ENCODE measurements at regions of chr6 and their contacts with region 1.

Region 1: DNA sequence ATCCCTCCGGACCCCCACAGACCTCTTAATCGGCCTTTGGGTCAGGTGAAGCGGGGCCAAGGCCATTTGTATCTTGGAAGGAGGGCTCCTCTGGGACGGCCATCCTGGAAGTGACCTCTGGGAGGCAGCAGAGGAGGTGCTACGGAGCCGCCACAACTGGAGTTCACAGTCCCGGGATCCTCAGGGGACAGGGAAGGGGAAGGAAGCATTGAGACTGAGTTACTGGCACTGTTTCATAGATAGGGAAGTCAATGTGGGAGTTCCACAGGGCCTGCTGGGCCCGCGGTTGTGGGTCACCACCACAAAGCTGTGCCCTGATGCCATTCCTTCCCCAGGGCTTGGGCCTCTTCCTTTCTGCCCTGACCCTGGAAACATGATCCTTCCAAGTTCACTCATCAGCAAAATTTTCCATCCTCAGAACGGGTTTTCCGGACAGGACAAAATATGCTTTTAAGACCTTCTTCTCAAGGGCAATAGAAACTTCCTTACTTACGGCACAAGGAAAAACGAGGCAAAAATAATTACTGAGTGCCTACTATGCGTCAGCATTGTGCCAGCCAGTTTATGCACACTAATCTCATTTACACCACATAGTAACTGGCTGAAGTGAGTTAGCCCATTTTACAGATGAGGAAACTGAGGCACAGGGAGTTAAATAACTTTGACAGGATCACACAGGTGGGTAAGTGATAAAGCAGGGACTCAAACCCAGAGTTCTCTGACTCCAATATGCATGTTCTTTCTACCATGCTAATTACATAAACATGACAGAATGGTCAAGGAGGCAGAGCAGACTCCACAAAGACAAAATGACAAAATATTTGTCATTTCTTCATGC is 143.8 kb downstream of the UNC5CL start:
- DNase-seq: peak; percentile 68 to 76 (median 72)
- ATAC-seq: peak; percentile 84
- H3K4me3 ChIP-seq: no peak overlapping the region
- H3K27ac ChIP-seq: peak overlapping the region in 2 of 4 donors; percentile 5 to 27
- H3K4me1 ChIP-seq: peaks cover 43% of the 10 kb centered on the region
- H3K27me3 ChIP-seq: no peaks in the 10 kb centered on the region
- CTCF ChIP-seq: peak; percentile 46 to 80 (median 73)
- POLR2A ChIP-seq: no peak

Region 2: DNA sequence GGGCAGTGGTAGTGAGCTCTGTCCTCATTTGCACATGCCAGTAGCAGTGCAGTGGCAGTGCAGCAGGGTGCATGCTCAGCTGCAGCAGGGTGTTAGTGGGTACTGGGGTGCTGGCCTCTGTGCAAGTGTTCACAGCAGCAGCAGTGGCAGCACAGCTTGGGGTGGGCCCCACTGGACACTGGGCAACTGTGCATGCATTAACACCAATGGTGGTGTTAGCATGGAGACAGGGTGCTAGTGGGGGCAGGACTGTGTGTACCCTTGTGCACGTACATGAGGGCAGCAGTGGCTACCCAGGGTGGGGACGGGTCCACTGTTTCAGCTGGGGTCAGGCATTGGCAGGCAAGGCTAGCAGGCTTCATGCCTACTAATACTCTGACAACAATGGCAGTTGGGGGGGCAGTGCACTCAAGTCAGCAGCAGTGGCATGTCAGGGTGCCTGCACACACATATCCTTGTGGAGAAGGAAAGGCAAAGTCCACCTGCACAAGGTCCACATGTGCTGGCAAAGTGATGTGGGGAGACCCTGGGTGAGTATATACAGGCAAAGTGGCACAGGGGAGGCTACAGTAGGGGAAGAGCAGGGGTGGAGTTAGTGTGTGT is 83.6 kb after region 1 on chr6:
- intact Hi-C with region 1: no loop called
- DNase-seq: no peak
- ATAC-seq: no peak
- H3K4me3 ChIP-seq: no peak overlapping the region
- H3K27ac ChIP-seq: no peak overlapping the region
- H3K4me1 ChIP-seq: no peaks in the 10 kb centered on the region
- H3K27me3 ChIP-seq: no peaks in the 10 kb centered on the region
- CTCF ChIP-seq: no peak
- POLR2A ChIP-seq: no peak

Region 3: DNA sequence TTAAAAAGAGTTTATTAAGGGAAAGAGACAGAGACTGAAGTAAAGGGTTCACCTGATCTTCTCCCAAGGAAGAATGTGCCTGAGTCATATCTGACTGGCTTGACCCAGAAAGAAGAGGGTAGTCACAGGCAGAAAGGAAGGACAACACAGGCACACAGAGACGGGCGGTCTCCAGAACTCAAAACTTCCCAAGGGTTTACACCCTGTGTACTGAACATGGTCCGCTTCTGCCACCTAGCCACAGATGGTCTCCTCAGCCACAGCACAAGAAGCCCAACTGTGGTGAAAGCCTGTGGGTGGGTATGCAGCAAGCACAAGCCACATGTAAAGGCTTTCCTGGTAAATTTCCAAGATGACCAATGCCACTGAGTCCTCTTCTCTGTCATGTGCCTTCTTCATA is 126.7 kb after region 1 on chr6:
- intact Hi-C with region 1: loop called (anchors 5 kb)
- DNase-seq: peak; percentile 76 to 86 (median 83)
- ATAC-seq: peak; percentile 90
- H3K4me3 ChIP-seq: no peak overlapping the region
- H3K27ac ChIP-seq: peak overlapping the region in 3 of 4 donors; percentile 18 to 62 (median 36)
- H3K4me1 ChIP-seq: peaks cover 68% of the 10 kb centered on the region
- H3K27me3 ChIP-seq: no peaks in the 10 kb centered on the region
- CTCF ChIP-seq: peak; percentile 17 to 75 (median 67)
- POLR2A ChIP-seq: no peak

Measured in body of pancreas (tissue), 4 donors.